Activated naive CD4-positive, alpha-beta T cell treated with anti-CD3 and anti-CD28 coated beads for 36 hours (primary cell): ENCODE measurements at regions of chr5 and their contacts with region 1.

Region 1: DNA sequence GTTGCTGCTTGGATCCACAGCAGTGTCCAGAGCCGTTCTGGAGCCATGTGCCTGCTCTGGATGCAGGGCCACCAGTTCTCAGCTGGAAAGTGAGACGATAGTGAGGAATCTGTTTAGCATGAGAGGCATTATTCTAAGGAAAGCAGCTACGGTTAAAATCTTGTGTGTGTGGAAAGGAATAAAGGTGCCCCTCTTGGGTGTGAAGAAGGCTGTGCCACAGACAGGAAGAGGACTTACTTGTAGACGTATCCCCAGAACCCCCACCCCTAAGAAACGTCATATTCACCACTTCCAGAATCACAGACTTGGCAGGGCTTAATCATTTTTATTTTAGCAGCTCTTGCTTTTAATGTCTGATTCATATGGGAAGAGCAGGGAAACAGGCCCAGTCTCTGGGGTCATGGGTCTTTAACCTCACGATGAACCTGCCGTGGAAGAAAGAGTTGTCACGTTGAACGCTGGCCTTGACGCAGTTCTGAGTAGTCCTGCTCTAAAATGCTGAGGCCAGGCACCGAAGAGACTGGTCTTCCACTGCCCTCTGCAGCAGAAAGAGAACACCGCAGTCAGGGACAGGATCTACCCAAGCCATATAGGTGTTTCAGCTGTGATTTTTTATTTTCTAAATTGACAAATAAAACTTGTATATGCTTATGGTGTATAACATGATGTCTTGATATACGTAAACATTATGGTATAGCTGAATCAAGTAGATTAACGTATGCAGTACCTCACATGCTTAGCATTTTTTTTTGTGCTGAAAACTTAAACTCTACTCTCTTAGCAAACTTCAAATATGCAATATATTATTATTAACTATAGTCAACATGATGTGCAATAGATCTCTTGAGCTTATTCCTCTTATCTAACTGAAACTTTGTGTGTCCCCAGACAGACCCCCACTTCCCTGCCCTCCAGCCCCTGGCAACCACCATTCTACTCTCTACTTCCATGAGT is 38.8 kb downstream of the CARTPT start:
- DNase-seq: peak; percentile 75
- H3K4me3 Mint-ChIP-seq: no peak overlapping the region
- H3K27ac Mint-ChIP-seq: no peak overlapping the region
- H3K4me1 Mint-ChIP-seq: peaks cover 6% of the 10 kb centered on the region
- H3K27me3 Mint-ChIP-seq: peaks cover 3% of the 10 kb centered on the region

Region 2: DNA sequence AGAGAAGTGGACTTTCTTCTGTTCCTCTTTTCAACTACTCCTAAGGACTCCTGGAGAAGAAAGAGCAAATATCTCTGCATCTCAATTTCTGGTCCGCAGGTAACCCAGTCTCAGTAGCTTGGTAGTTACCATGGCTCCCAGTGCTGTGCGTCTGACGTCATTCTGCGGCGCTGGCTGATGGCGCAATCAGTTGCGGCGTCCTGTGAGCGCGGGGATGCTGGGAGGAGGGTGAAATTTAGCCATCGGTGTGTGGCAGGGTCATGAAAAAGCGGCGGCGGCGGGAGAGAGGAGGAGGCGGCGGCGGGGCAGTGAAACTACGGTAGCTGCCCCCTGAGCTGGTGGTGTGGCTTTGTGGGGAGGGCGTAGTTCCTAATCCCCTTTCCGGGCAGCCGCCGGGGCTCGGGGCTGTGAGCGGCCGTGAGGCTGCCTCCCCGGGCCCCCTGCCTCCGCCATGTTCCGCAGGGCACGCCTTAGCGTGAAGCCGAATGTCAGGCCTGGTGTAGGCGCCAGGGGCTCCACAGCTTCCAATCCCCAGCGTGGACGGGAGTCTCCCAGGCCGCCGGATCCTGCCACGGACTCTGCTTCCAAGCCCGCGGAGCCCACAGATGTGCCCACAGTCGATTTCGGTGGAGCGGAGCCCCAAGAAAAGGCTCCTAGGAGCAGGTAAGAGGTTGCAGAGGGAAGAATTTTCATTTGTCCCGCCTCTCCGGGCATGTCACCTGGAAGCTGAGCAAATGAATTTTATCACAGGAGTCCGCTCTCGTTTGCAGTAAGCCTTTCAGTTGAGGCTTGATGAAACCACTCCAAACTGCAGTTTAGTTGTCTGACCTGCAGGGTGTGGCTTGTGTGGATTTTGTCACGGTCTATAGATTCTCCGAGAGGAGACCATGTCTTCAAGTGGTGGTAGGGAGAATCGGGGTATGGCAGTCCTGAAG is 302.2 kb before region 1 on chr5 and contains the start of gene BDP1:
- CTCF ChIA-PET with region 1: no interaction called
- intact Hi-C with region 1: loop called (anchors 5 kb)
- DNase-seq: peak; percentile 99
- H3K4me3 Mint-ChIP-seq: peak within 1 kb of the TSS; percentile 92
- H3K27ac Mint-ChIP-seq: peak within 1 kb of the TSS; percentile 95
- H3K4me1 Mint-ChIP-seq: peaks cover 20% of the 10 kb centered on the region
- H3K27me3 Mint-ChIP-seq: peaks cover 3% of the 10 kb centered on the region
- total RNA-seq, gene BDP1: 20.6 to 20.8 TPM

Region 3: DNA sequence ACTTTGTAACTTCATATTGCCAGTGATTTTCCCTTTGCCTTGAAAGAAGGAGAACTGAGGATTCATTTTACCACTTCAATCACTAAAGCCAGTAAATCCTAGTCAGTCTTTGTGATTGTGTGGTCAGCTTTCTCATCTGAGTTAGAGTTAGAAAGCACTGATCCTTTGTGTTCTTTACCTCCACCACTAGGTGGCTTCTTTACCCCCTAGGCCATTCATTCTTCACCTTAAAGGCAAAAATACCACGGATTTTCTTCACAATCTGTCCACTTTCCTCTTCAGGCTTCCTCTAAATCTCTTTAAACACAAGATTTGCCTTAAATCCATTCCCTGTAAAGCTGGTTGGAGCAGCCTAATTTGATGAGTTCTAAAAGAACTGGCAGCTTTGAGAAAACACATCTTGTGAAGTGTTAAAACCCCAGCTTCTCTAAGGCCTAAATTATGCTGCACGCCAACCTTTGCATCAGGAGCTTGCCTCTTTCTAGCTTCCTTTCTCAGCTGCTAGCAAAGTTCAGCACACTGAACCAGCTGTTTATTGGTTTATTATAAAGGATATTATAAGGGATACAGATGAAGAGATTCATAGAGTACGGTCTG is 282.0 kb before region 1 on chr5:
- CTCF ChIA-PET with region 1: interaction called, 9 read pairs
- intact Hi-C with region 1: loop called (anchors 1 kb)
- DNase-seq: no peak
- H3K4me3 Mint-ChIP-seq: no peak overlapping the region
- H3K27ac Mint-ChIP-seq: no peak overlapping the region
- H3K4me1 Mint-ChIP-seq: peaks cover 3% of the 10 kb centered on the region
- H3K27me3 Mint-ChIP-seq: no peaks in the 10 kb centered on the region

Region 4: DNA sequence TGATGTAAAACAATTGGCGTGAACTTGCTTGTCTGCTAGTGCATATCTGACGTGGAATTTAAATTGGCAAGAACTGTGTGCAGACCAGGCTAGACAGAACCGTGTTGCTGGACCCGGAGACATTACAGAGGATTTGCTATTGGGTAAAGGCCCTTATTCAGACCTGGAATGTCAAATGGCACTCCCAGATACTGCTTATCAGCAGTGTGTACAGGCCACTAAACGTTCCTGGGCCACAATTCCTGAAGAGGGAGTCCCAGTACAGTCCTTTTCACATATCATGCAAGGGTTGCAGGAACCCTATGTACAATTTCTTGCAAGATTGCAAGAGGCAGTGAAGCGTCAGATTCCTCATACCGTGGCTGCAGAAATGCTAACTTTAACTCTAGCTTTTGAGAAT is 184.3 kb before region 1 on chr5:
- CTCF ChIA-PET with region 1: no interaction called
- intact Hi-C with region 1: loop called (anchors 5 kb)
- DNase-seq: no peak
- H3K4me3 Mint-ChIP-seq: no peak overlapping the region
- H3K27ac Mint-ChIP-seq: no peak overlapping the region
- H3K4me1 Mint-ChIP-seq: no peaks in the 10 kb centered on the region
- H3K27me3 Mint-ChIP-seq: no peaks in the 10 kb centered on the region

Region 5: DNA sequence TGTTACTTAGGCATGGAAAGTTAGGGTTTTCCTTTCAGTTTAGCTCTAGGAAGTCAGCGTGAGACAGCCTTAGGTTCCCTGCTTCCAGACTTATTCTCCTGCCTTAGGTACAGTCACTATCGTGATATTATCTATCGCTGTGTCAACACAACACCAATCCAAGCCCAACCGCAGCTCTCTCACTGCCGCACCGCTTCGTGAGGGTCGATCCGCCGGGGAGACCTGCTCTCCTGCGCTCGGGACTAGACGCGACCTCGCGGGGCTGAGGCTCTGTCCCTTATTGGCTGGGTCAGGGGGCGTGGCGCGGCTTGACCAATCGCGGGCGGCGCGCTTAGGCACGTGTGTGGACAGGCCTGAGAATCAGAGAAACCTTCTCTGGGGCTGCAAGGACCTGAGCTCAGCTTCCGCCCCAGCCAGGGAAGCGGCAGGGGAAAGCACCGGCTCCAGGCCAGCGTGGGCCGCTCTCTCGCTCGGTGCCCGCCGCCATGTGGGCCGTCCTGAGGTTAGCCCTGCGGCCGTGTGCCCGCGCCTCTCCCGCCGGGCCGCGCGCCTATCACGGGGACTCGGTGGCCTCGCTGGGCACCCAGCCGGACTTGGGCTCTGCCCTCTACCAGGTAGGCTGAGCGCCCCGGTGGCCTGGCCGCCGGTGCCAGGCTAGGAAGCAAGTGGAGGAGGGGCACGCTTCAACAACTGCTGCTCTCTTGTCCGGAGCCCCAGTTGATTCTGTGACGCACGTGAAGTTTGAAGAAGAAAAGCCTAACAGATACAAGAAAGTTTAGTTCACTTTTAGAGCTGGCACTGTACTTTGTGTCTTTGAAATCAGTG is 170.7 kb before region 1 on chr5 and contains the start of gene MCCC2:
- CTCF ChIA-PET with region 1: no interaction called
- intact Hi-C with region 1: loop called (anchors 5 kb)
- DNase-seq: peak; percentile 98
- H3K4me3 Mint-ChIP-seq: peak within 1 kb of the TSS; percentile 94
- H3K27ac Mint-ChIP-seq: peak within 1 kb of the TSS; percentile 94
- H3K4me1 Mint-ChIP-seq: peaks cover 31% of the 10 kb centered on the region
- H3K27me3 Mint-ChIP-seq: no peaks in the 10 kb centered on the region
- total RNA-seq, gene MCCC2: 49.3 to 51.6 TPM